Activated CD4-positive, alpha-beta T cell treated with anti-CD3 and anti-CD28 coated beads, Interleukin-2, amount 10 ng/mL, durations not matched to agents 7 days and 5 days (primary cell): ENCODE measurements at regions of chr6 and their contacts with region 1.

Region 1: DNA sequence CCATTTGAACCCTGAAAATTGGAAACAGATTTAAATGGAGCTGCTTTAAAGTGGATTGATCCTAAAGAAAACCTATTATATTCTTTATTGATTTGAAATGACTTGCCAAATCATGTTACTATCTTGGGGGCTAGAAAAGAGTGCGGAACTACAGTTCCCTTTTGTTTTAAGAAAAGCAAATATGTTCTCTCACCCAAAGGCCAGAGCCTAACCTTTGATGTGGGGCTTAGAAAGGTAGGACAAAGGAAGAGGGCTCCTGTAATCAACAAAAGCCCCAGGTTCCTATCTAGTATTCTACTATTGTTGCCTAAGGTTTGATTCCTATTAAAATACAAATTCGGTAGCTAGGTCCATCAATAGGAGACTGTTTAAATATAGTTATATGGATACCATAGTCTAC is 100.8 kb upstream of the BEND6 start:
- DNase-seq: no peak
- H3K4me3 Mint-ChIP-seq: no peak overlapping the region
- H3K27ac Mint-ChIP-seq: no peak overlapping the region
- H3K4me1 Mint-ChIP-seq: peaks cover 28% of the 10 kb centered on the region
- H3K27me3 Mint-ChIP-seq: peaks cover 32% of the 10 kb centered on the region

Region 2: GRCh38 chr6:56730663-56731529 is 123.2 kb before region 1 on chr6:
- CTCF ChIA-PET with region 1: no interaction called
- POLR2A ChIA-PET with region 1: no interaction called
- DNase-seq: no peak
- H3K4me3 Mint-ChIP-seq: no peak overlapping the region
- H3K27ac Mint-ChIP-seq: no peak overlapping the region
- H3K4me1 Mint-ChIP-seq: no peaks in the 10 kb centered on the region
- H3K27me3 Mint-ChIP-seq: no peaks in the 10 kb centered on the region

Region 3: GRCh38 chr6:56843573-56844349 is 10.3 kb before region 1 on chr6:
- CTCF ChIA-PET with region 1: no interaction called
- POLR2A ChIA-PET with region 1: no interaction called
- DNase-seq: peak; percentile 57
- H3K4me3 Mint-ChIP-seq: peak overlapping the region; percentile 66
- H3K27ac Mint-ChIP-seq: no peak overlapping the region
- H3K4me1 Mint-ChIP-seq: peaks cover 9% of the 10 kb centered on the region
- H3K27me3 Mint-ChIP-seq: peaks cover 57% of the 10 kb centered on the region

Region 4: GRCh38 chr6:57242505-57242904 is 388.4 kb after region 1 on chr6:
- CTCF ChIA-PET with region 1: no interaction called
- POLR2A ChIA-PET with region 1: interaction called, 13 read pairs
- DNase-seq: no peak
- H3K4me3 Mint-ChIP-seq: no peak overlapping the region
- H3K27ac Mint-ChIP-seq: no peak overlapping the region
- H3K4me1 Mint-ChIP-seq: no peaks in the 10 kb centered on the region
- H3K27me3 Mint-ChIP-seq: peaks cover 3% of the 10 kb centered on the region